Posterior vena cava (tissue), 2 donors: ENCODE measurements at regions of chr22 and their contacts with region 1.

Region 1: DNA sequence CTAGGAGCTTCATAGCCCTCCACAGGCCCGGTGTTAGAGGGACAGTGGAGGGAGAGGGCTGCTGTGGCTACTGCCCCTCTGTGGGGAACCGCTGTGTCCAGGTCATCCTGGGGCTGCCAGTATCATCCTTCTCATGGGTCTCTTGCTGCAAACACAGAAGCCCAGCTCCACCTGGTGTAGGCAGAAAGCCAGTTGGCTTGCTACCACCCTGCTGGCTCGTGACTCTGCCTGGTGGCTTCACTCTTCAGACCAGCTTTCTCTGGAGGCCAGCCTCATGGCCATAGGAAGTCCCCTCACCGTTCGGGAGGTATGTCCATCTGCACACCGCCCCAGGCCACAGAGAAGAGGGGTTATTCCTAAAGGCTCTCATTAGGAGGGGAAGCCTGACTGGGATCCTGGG is 19.4 kb upstream of the SUSD2 start:
- DNase-seq: no peak

Region 2: DNA sequence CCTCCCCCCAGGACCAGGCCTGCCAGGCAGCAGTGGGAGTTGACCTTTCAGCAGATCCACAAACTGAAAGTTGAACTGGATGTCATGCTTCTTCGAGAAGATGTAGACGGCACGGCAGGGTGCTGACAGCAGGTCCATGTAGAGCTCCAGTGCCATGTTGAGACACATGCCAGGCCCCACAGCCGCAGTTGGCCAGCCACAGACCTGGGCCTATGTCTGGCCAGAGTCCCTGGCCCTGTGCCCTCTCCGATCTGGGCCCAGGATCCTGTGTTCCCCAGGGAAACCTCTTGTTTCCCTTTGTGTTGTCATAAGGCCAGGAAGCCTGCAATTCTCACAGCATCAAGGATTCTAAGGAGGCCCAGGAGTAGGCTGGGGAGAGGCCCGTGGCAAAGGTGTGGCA is 156.7 kb before region 1 on chr22 and contains the start of gene GSTT4:
- intact Hi-C with region 1: loop called in 1 of 2 experiments (anchors 10 kb)
- DNase-seq: no peak
- total RNA-seq, gene GSTT4: not detected